ENCODE measurements at regions of chr10 and their contacts with region 1.

Region 1: GRCh38 chr10:80055760-80056159 is 22.7 kb upstream of the TMEM254 start:
- DNase-seq: no peak
- H3K4me3 ChIP-seq: no peak overlapping the region
- H3K27ac ChIP-seq: no peak overlapping the region
- H3K4me1 ChIP-seq: no peaks in the 10 kb centered on the region
- H3K27me3 ChIP-seq: no peaks in the 10 kb centered on the region
- CTCF ChIP-seq: no peak
- EP300 ChIP-seq: no peak
- POLR2A ChIP-seq: no peak
- RAD21 ChIP-seq: no peak

Region 2: DNA sequence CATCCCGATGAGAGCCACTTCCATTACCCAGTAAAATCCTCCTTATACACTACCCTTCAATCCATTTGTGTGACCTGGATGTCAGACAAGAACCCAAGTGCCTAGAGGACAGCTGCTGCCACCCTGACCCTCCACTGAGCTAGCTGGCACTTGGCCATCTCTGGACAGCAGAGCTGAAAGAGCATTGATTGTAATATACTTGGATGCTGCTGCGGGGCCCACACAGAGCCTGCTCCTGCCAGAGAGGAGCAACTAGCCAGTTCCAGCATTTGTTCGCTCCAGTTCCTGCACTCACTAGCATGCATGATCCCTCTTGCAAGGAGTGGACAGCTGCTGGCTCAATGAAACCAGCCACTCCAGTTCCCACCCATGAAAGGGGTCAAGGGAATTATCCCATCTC is 14.3 kb after region 1 on chr10:
- CTCF ChIA-PET with region 1: interaction called, 24 read pairs
- POLR2A ChIA-PET with region 1: interaction called, 5 read pairs
- DNase-seq: peak in 1 of 2 experiments; percentile 52
- H3K4me3 ChIP-seq: no peak overlapping the region
- H3K27ac ChIP-seq: no peak overlapping the region; the same call in 1 of the 2 replicates
- H3K4me1 ChIP-seq: peaks cover 5 to 21% (median 8%) of the 10 kb centered on the region in 4 experiments
- H3K27me3 ChIP-seq: no peaks in the 10 kb centered on the region
- CTCF ChIP-seq: no peak
- EP300 ChIP-seq: no peak
- POLR2A ChIP-seq: no peak
- RAD21 ChIP-seq: no peak

Region 3: GRCh38 chr10:80078448-80079311 is 22.9 kb after region 1 on chr10 and contains the start of gene TMEM254:
- CTCF ChIA-PET with region 1: interaction called, 13 read pairs
- POLR2A ChIA-PET with region 1: interaction called, 3 read pairs
- DNase-seq: peak; percentile 64 to 91
- H3K4me3 ChIP-seq: peak within 1 kb of the TSS; percentile 52 to 80 (median 74)
- H3K27ac ChIP-seq: peak within 1 kb of the TSS; percentile 78
- H3K4me1 ChIP-seq: 0 out of 7 replicates have a peak, but pooled peaks cover 0 to 2% (median 0%) of the 10 kb centered on the region in 4 experiments
- H3K27me3 ChIP-seq: no peaks in the 10 kb centered on the region
- CTCF ChIP-seq: no peak; a peak in 1 of 4 replicates
- EP300 ChIP-seq: no peak
- POLR2A ChIP-seq: peak; percentile 50 to 80
- RAD21 ChIP-seq: peak in 1 of 2 experiments; percentile 4; a peak in 1 of 4 replicates
- total RNA-seq, gene TMEM254: 26.4 and 26.9 TPM in 2 replicates

Region 4: GRCh38 chr10:80104066-80104926 is 48.5 kb after region 1 on chr10:
- CTCF ChIA-PET with region 1: interaction called, 39 read pairs
- POLR2A ChIA-PET with region 1: no interaction called
- DNase-seq: no peak
- H3K4me3 ChIP-seq: no peak overlapping the region
- H3K27ac ChIP-seq: no peak overlapping the region
- H3K4me1 ChIP-seq: peaks cover 5 to 29% (median 19%) of the 10 kb centered on the region in 4 experiments; a peak in 6 of 7 replicates
- H3K27me3 ChIP-seq: no peaks in the 10 kb centered on the region
- CTCF ChIP-seq: no peak
- EP300 ChIP-seq: no peak
- POLR2A ChIP-seq: no peak
- RAD21 ChIP-seq: no peak

Region 5: GRCh38 chr10:80132299-80133139 is 76.8 kb after region 1 on chr10 and contains the start of gene PLAC9:
- CTCF ChIA-PET with region 1: interaction called, 57 read pairs
- POLR2A ChIA-PET with region 1: interaction called, 5 read pairs
- DNase-seq: peak in 1 of 2 experiments; percentile 70
- H3K4me3 ChIP-seq: peak within 1 kb of the TSS; percentile 42 to 76 (median 50)
- H3K27ac ChIP-seq: no peak within 1 kb of the TSS
- H3K4me1 ChIP-seq: peaks cover 5 to 9% (median 8%) of the 10 kb centered on the region in 4 experiments; a peak in 6 of 7 replicates
- H3K27me3 ChIP-seq: peaks cover 0 to 11% (median 8%) of the 10 kb centered on the region in 4 experiments; a peak in 4 of 7 replicates
- CTCF ChIP-seq: no peak
- EP300 ChIP-seq: no peak
- POLR2A ChIP-seq: no peak; a peak in 1 of 3 replicates
- RAD21 ChIP-seq: no peak
- total RNA-seq, gene PLAC9: 12.4 and 16.7 TPM in 2 replicates

Measured in H1 (cell line).